ENCODE measurements at regions of chr9 and their contacts with region 1.

Region 1: DNA sequence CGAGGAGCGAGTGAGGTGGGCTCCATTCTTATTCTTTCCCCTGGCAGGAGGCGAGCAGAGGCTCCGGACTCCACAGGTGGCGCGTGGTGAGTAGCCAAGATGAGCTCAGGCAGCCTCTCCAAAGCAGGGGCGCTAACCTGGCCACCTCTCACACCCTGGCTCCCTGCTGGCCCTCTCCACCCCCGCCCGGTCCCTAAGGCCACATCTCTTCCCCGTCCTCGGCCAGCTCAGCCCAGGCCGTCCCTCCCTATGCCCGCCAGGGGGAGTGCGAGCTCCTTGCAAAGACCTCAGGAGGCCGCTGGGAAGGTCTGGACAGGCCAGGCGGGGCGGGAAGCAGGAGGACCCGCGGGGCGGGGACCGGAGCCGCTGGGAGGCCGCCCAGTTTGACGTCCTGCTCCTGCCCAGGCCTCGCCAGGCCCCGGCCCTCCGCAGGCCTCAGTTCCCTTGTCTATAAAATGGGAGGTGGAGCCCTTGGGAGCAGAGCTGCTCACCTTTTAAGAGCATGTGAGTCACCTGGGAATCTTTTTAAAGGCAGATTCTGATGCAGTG is 46.3 kb upstream of the GGTA1 start:
- DNase-seq: peak; percentile 93
- H3K4me3 ChIP-seq: peak overlapping the region in 1 of 4 donors; percentile 28
- H3K27ac ChIP-seq: peak overlapping the region in 1 of 4 donors; percentile 6
- H3K4me1 ChIP-seq: peaks cover 8 to 20% (median 12%) of the 10 kb centered on the region in 4 donors
- H3K27me3 ChIP-seq: no peaks in the 10 kb centered on the region
- CTCF ChIP-seq: peak; percentile 89 to 94 (median 94)
- EP300 ChIP-seq: no peak
- POLR2A ChIP-seq: no peak

Region 2: DNA sequence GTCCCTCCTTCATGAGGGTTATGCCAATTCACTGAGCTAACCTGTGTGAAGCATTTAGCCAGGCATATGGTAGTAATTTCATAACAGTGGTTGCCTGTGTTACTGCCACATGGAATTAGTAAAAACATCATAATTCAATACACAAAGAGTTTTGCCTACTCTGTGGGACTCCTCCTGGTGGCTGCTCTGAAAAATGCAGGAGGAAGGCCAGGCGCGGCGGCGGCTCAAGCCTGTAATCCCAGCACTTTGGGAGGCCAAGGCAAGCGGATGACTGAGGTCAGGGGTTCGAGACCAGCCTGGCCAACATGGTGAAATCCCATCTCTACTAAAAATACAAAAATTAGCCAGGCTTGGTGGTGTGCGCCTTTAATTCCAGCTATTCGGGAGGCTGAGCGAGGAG is 1513.3 kb before region 1 on chr9:
- in situ Hi-C with region 1: no loop called
- intact Hi-C with region 1: no loop called
- DNase-seq: no peak
- H3K4me3 ChIP-seq: no peak overlapping the region
- H3K27ac ChIP-seq: no peak overlapping the region
- H3K4me1 ChIP-seq: no peaks in the 10 kb centered on the region
- H3K27me3 ChIP-seq: no peaks in the 10 kb centered on the region
- CTCF ChIP-seq: no peak
- EP300 ChIP-seq: no peak
- POLR2A ChIP-seq: no peak

Region 3: DNA sequence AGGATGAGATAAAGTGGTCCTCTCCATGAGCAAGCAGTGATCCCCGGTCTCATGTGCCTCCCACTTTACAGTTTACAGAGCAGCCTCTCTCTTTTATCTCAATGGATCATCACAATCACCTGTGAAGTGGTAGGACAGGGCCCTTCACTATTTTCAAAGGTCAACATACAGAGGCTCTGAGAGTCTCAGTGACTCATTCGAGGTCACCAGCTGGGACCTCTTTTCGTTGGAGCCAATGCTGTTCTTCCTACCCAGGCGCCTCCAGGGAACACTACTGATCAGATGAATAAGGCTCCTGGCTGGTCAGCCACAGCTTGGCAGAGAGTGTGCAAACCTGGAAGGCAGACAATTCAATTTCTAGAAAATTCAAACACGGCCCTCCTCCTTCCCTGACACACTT is 62.9 kb before region 1 on chr9:
- in situ Hi-C with region 1: no loop called
- intact Hi-C with region 1: no loop called
- DNase-seq: no peak
- H3K4me3 ChIP-seq: no peak overlapping the region
- H3K27ac ChIP-seq: no peak overlapping the region
- H3K4me1 ChIP-seq: peaks cover 0 to 35% (median 0%) of the 10 kb centered on the region in 4 donors
- H3K27me3 ChIP-seq: no peaks in the 10 kb centered on the region
- CTCF ChIP-seq: no peak
- EP300 ChIP-seq: no peak
- POLR2A ChIP-seq: no peak

Region 4: GRCh38 chr9:121609845-121610570 is 64.1 kb after region 1 on chr9:
- in situ Hi-C with region 1: no loop called
- intact Hi-C with region 1: loop called (anchors 10 kb)
- DNase-seq: no peak
- H3K4me3 ChIP-seq: no peak overlapping the region
- H3K27ac ChIP-seq: peak overlapping the region; percentile 32 to 64 (median 52)
- H3K4me1 ChIP-seq: peaks cover 19 to 44% (median 27%) of the 10 kb centered on the region in 4 donors
- H3K27me3 ChIP-seq: no peaks in the 10 kb centered on the region
- CTCF ChIP-seq: no peak
- EP300 ChIP-seq: no peak
- POLR2A ChIP-seq: no peak

Region 5: DNA sequence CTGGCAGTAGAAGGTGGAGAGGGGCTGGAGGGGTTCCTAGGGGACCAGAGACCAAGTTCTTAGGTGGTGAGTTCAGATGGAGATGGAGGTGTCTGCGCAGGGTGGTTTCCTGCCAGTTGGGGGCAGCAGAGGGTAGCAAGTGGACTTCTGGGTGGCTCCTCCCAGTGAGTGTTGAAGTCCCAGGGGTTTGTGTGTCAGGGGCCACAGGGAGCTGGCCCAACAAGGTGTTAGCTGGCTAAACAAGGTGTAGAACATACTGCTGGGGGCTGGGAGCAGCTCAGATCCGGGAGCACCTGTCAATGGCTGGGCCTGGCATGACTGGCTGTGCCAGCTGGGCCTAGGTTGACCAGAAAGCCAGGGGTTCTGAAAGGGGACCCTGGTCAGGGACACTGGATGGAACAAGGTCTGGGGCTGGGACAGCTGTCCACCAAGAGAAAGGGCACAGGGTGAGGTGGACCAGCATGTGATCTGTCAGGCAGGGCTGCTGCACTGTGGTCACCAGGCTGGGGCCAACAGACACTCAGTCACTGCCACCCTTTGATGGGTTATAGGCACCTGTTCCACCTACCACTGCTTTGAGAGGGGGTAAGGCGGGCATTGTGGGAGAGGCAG is 141.1 kb after region 1 on chr9:
- in situ Hi-C with region 1: loop called in 2 of 4 experiments (anchors 10 kb)
- intact Hi-C with region 1: loop called (anchors 5 kb)
- DNase-seq: peak; percentile 86
- H3K4me3 ChIP-seq: no peak overlapping the region
- H3K27ac ChIP-seq: peak overlapping the region in 3 of 4 donors; percentile 20 to 47 (median 38)
- H3K4me1 ChIP-seq: peaks cover 2 to 26% (median 22%) of the 10 kb centered on the region in 4 donors
- H3K27me3 ChIP-seq: no peaks in the 10 kb centered on the region
- CTCF ChIP-seq: peak; percentile 80 to 90 (median 86)
- EP300 ChIP-seq: no peak
- POLR2A ChIP-seq: no peak

Region 6: GRCh38 chr9:121692606-121693387 is 146.8 kb after region 1 on chr9:
- in situ Hi-C with region 1: loop called in 2 of 4 experiments (anchors 10 kb)
- intact Hi-C with region 1: loop called (anchors 5 kb)
- DNase-seq: no peak
- H3K4me3 ChIP-seq: no peak overlapping the region
- H3K27ac ChIP-seq: peak overlapping the region; percentile 41 to 61 (median 51)
- H3K4me1 ChIP-seq: peaks cover 2 to 35% (median 24%) of the 10 kb centered on the region in 4 donors
- H3K27me3 ChIP-seq: no peaks in the 10 kb centered on the region
- CTCF ChIP-seq: no peak
- EP300 ChIP-seq: no peak
- POLR2A ChIP-seq: no peak

Region 7: DNA sequence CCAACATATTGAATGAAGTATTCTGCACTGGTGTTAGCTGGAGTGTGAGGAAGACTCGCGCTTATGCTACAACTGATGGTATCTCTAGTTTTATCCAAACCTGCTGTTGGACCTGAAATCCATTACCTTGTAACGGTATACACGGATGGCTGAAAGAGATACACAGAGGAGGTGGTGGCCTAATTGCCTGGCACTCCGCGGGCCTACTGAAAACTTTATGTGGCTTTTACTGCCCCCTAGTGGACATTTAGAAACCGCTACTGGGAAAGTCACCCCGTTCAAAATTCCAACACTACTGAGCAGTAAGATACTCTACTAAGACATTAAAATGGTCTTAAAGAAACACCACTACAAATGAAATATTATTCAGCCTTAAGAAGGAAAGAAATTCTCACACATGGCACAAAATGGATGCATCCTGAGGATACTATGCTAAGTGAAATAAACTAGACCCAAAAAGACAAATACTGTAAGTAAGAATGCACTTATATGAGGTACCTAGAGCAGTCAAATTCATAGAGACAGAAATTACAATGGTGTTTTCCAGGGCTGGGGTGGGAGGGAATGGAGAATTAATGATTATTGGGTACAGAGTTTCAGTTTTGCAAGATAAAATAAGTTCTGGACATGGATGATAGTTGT is 446.7 kb after region 1 on chr9:
- in situ Hi-C with region 1: loop called (anchors 10 to 25 kb)
- intact Hi-C with region 1: loop called (anchors 5 kb)
- DNase-seq: peak; percentile 47
- H3K4me3 ChIP-seq: no peak overlapping the region
- H3K27ac ChIP-seq: no peak overlapping the region
- H3K4me1 ChIP-seq: peaks cover 0 to 2% (median 0%) of the 10 kb centered on the region in 4 donors
- H3K27me3 ChIP-seq: no peaks in the 10 kb centered on the region
- CTCF ChIP-seq: peak; percentile 80 to 89 (median 84)
- EP300 ChIP-seq: no peak
- POLR2A ChIP-seq: no peak

Region 8: DNA sequence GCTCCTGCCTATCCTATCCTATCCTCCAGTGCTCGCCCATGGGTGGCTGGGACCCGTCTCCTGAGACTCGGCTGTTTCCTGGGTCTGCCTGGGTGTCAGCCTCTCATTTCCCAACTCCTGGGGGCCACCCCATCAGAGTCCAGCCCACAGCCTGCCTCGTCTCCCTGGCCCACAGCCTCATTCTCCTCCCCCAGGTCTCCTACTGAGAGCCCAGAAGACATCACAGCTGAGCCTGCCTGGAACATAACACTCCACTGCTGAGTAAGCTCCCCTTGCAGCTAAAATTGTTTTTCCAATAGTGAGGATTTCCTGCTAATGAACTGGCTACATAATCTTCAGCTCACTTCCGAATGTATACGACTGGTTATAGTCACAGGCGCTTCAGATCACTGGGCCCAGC is 451.8 kb after region 1 on chr9:
- in situ Hi-C with region 1: loop called (anchors 10 to 25 kb)
- intact Hi-C with region 1: loop called (anchors 5 kb)
- DNase-seq: no peak
- H3K4me3 ChIP-seq: no peak overlapping the region
- H3K27ac ChIP-seq: no peak overlapping the region
- H3K4me1 ChIP-seq: peaks cover 0 to 6% (median 2%) of the 10 kb centered on the region in 4 donors
- H3K27me3 ChIP-seq: no peaks in the 10 kb centered on the region
- CTCF ChIP-seq: no peak
- EP300 ChIP-seq: no peak
- POLR2A ChIP-seq: no peak